BJ (cell line): ENCODE measurements at regions of chr14 and their contacts with region 1.

Region 1: GRCh38 chr14:63770187-63770807 is 42.4 kb upstream of the SGPP1 start:
- DNase-seq: peak; percentile 23
- H3K4me3 ChIP-seq: no peak overlapping the region
- H3K27me3 ChIP-seq: no peaks in the 10 kb centered on the region
- CTCF ChIP-seq: peak; percentile 70

Region 2: DNA sequence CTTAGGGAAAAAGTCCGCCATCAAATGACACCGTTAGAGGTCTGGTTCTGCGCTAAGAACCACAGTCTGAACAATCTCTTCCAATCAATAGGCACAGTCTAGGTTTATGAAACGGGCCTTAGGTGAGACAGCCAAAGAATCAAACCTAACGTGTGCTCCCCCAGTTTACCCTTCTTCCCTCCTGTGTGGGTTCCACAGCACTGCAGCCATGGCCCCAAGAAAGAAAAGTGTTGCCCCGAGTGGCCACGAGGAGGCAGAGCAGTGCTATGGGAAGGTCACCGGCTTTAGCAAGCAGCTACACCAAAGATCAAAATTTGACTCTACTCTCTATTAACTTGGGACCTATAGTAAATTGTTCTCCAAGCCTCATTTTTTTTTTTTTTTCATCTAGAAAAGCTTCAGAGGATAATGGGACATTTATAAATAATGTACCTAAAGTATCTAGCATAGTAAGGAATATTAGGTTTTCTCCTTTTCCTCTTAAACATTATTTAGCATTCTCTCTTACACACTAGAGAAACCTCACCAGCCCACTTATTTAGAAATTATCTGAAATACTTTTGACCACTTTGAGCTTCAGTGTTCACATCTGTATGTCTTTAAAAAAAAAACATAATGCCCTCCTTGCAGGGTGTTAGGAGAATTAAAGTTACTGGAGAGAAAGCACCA is 381.4 kb before region 1 on chr14:
- CTCF ChIA-PET with region 1: interaction called, 20 read pairs
- POLR2A ChIA-PET with region 1: no interaction called
- DNase-seq: no peak
- H3K4me3 ChIP-seq: no peak overlapping the region
- H3K27me3 ChIP-seq: no peaks in the 10 kb centered on the region
- CTCF ChIP-seq: peak; percentile 85

Region 3: GRCh38 chr14:63632932-63633514 is 137.3 kb before region 1 on chr14:
- CTCF ChIA-PET with region 1: interaction called, 30 read pairs
- POLR2A ChIA-PET with region 1: no interaction called
- DNase-seq: no peak
- H3K4me3 ChIP-seq: no peak overlapping the region
- H3K27me3 ChIP-seq: no peaks in the 10 kb centered on the region
- CTCF ChIP-seq: peak; percentile 58

Region 4: DNA sequence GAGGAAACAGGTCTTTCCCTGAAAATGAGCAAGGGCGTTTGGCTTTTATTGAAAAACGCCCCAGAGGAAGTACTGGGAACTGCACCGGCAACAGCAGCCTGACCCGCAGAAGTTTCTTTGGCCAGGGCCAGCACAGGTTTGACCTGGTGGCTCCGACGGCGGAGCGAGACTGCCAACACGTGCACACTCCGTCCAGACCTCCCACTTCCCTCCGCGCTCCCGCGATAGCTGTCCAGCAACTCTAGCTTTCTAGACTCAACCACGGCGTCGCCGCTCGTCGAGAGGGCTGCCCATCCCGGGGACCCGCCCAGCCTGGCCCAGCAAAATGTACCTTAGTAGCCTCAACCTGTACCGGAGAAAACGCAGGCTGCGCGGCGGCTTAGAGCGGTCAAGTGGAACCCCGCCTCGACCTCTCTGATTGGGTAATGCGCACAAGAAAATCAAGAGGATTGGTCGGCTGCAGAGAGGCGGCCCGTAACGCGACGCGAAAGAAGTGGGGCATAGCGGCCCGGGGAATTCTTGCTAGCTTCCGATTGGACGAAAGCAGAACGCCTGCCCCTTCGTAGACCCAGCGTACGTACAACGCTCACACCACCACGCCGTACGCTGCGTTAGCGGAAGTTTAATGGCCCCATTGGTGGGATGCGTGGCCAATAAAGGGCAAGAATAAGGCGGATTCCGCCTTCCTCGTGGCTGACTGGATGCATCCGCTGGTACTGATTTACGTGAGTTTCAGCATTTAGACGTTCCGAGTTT is 128.6 kb before region 1 on chr14 and contains the start of gene WDR89:
- CTCF ChIA-PET with region 1: interaction called, 18 read pairs
- POLR2A ChIA-PET with region 1: interaction called, 3 read pairs
- DNase-seq: peak; percentile 98
- H3K4me3 ChIP-seq: peak within 1 kb of the TSS; percentile 56
- H3K27me3 ChIP-seq: no peaks in the 10 kb centered on the region
- CTCF ChIP-seq: peak; percentile 81
- polyA plus RNA-seq, gene WDR89: 2.0 and 5.6 TPM in 2 replicates

Region 5: DNA sequence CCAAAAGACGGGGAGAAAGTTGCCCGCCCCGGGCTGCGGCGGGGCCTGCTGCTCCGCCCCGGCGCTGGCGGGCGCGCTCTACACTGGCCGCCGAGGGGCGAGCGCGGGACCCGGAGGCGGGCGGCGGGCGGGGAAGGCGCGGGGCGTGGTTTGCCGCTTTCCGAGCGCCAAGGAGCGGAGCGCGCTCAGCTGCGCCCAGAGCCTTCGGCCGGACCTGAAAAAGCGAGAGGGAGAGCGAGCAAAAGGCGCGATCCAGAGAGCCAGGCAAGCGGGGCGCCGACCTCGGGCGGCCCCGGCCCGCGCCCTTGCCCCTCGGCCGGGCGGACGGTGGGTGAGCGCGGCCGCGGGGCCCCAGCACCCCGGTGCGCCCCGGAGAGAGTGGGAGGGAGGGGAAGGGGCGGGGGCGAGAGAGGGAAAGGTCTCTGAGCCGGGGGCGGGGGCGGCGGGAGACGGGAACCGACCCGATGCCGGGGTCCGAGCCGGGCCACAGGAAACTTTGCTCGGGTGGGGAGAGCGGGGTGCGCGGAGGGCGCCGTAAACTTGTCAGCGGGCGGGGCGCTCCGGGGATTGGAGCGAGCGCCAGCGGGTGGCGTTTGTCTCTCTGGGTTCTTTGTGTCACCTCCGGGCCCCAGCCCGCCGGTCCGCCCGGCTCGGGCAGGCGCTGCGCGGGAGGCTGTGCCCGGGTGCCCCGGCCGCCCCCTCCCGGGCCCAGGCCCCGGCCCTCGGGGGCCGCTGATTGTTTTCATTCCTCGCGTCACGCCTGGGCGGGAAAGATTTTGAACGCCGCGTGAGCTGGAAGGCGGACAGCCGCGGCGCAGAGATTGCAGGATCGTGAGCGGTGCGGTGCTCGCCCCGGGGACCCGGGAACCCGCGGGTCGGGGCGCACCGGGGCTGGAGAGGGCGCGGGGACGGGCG is 82.8 kb after region 1 on chr14 and contains the start of gene SYNE2:
- CTCF ChIA-PET with region 1: no interaction called
- POLR2A ChIA-PET with region 1: no interaction called
- DNase-seq: no peak
- H3K4me3 ChIP-seq: peak within 1 kb of the TSS; percentile 70
- H3K27me3 ChIP-seq: no peaks in the 10 kb centered on the region; the same call in 1 of the 2 replicates
- CTCF ChIP-seq: no peak
- polyA plus RNA-seq, gene SYNE2: 3.7 and 5.2 TPM in 2 replicates